Panc1 (cell line): ENCODE measurements at regions of chr3 and their contacts with region 1.

Region 1: DNA sequence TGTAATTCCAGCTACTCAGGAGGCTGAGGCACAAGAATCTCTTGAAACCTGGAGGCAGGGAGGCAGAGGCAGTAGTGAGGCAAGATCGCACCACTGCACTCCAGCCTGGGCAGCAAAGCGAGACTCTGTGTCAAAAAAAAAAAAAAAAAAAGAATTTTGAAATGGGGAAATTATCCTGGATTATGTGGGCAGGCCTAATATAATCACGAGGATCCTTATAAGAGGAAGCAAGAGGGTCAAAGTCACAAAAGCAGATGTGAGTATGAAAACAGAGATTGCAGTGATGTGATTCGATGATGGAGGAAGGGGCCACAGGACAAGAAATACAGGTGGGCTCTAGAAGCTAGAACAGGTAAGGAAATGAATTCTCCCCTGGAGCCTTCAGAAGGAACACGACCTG is 159.6 kb downstream of the LEKR1 start:
- DNase-seq: no peak
- ATAC-seq: no peak
- H3K4me3 ChIP-seq: no peak overlapping the region
- H3K27ac ChIP-seq: no peak overlapping the region
- H3K4me1 ChIP-seq: no peaks in the 10 kb centered on the region
- H3K27me3 ChIP-seq: no peaks in the 10 kb centered on the region
- CTCF ChIP-seq: no peak

Region 2: DNA sequence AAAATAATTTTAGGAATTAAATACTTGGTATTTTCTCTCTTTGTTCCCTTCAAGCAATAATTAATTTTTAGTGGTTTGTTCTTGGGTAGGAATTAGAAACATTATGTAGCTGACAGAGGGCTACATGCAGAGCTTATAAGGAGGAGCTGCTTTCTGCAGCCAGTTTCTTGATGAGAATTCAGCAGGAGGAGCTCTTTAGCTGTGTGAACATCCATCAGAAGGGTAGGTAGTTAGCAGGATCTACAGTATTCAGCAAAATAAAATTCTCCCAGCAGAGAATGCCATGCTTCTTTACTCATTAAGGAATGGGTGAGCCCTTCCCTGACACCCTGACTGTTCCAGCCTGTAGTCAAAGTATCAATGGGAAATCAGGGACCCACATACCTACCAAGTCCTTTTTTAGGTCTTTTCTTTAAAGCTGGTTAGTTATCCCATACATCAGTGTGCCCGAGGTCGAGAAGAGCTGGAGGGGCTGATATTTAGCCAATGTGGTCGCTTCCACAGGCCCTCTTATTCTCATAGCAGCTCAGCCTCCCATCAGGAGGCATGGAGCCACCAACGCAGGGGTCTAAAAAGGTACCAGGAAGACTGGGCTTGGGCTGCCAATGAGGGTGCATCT is 811.4 kb before region 1 on chr3:
- CTCF ChIA-PET with region 1: no interaction called
- POLR2A ChIA-PET with region 1: interaction called, 15 read pairs
- in situ Hi-C with region 1: no loop called
- intact Hi-C with region 1: no loop called
- DNase-seq: no peak
- ATAC-seq: 0 out of 2 replicates have a peak, but pooled peaks have one; percentile 58
- H3K4me3 ChIP-seq: no peak overlapping the region
- H3K27ac ChIP-seq: no peak overlapping the region
- H3K4me1 ChIP-seq: no peaks in the 10 kb centered on the region
- H3K27me3 ChIP-seq: peaks cover under 1% of the 10 kb centered on the region; the same call in 1 of the 2 replicates
- CTCF ChIP-seq: peak; percentile 32; the same call in 1 of the 2 replicates

Region 3: GRCh38 chr3:156926551-156926950 is 59.2 kb before region 1 on chr3:
- CTCF ChIA-PET with region 1: no interaction called
- POLR2A ChIA-PET with region 1: no interaction called
- in situ Hi-C with region 1: no loop called
- intact Hi-C with region 1: no loop called
- DNase-seq: no peak
- ATAC-seq: no peak
- H3K4me3 ChIP-seq: no peak overlapping the region
- H3K27ac ChIP-seq: no peak overlapping the region
- H3K4me1 ChIP-seq: no peaks in the 10 kb centered on the region
- H3K27me3 ChIP-seq: no peaks in the 10 kb centered on the region
- CTCF ChIP-seq: no peak

Region 4: DNA sequence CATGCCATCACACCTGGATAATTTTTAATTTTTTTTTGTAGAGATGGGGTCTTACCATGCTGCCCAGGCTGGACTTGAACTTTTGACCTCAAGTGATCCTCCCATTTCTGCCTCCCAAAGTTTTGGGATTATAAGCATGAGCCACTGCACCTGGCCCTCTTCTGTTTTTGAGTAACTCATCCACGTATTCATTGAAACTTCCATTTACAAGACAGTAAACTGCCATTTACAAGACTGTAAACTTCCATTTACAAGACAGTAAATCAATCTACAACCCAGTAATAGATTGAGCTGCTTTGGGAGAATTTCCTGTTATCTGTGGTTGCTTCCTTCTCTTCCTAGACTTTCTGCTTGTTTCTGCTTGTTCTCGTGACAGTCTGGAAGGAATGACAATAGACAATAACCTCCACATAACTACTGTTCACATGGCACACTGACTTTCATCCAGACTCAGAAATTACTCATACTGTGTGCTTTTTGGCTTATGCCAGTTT is 289.0 kb after region 1 on chr3:
- CTCF ChIA-PET with region 1: no interaction called
- POLR2A ChIA-PET with region 1: no interaction called
- in situ Hi-C with region 1: no loop called
- intact Hi-C with region 1: no loop called
- DNase-seq: no peak
- ATAC-seq: peak; percentile 50; the same call in 1 of the 2 replicates
- H3K4me3 ChIP-seq: no peak overlapping the region
- H3K27ac ChIP-seq: no peak overlapping the region
- H3K4me1 ChIP-seq: no peaks in the 10 kb centered on the region
- H3K27me3 ChIP-seq: no peaks in the 10 kb centered on the region
- CTCF ChIP-seq: no peak